Right ventricle myocardium inferior (tissue), 1 donor: ENCODE measurements at regions of chr3 and their contacts with region 1.

Region 1: GRCh38 chr3:157618075-157618760 is 115.0 kb upstream of the VEPH1 start:
- DNase-seq: no peak
- ATAC-seq: no peak

Region 2: GRCh38 chr3:158434412-158435038 is 816.3 kb after region 1 on chr3:
- intact Hi-C with region 1: loop called (anchors 2 kb)
- DNase-seq: no peak
- ATAC-seq: peak; percentile 78

Region 3: DNA sequence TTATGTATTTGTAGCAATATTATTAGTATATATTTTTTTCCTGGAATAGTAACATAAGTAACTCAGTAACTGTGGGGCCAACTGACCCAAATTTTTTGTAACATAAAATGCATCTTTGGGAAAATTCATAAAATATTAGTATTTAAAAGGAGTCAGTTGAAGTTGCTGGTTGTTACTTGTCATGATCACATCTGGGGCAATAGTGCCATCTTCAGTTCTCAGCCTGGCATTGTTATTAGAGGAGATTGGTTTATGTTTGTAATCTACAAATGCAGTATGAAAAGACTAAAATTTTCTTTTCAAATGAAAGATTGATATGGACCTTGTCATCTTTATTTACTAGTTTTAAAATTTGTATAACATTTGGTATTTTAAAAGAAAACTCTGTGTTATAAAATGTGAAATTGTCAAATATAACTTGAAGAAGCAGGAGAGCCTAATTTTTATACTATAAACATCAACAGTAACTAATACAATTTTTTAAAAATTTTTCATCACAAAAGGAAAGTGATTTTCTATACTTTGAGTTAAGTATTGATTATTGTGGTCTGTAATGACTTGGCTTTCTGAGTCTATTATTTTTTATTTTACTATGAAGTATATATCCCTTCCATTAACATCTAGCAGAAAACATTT is 914.0 kb after region 1 on chr3:
- intact Hi-C with region 1: loop called (anchors 2 kb)
- DNase-seq: no peak
- ATAC-seq: no peak